ENCODE measurements at regions of chr6 and their contacts with region 1.

Region 1: DNA sequence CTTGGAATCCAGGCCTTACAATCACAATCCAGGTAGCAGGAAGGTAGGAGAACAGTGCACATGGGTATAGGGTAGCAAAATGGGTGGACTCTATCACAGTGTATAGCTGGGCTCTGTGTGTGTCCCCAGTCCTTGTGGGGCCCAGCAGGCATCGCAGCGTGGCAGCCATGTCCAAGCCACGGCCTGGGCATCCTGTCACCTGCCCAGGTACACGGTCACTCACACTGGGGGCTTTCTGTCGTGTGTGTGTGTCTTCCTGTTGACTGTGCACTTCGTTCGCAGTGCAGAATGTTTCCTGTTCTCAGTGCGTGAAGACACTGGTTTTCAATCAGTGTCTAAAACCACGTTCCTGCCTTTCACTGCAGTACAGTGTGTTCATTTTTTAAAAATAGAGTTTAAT is 523.2 kb upstream of the JARID2 start:
- DNase-seq: no peak
- H3K4me3 ChIP-seq: no peak overlapping the region
- CTCF ChIP-seq: no peak

Region 2: DNA sequence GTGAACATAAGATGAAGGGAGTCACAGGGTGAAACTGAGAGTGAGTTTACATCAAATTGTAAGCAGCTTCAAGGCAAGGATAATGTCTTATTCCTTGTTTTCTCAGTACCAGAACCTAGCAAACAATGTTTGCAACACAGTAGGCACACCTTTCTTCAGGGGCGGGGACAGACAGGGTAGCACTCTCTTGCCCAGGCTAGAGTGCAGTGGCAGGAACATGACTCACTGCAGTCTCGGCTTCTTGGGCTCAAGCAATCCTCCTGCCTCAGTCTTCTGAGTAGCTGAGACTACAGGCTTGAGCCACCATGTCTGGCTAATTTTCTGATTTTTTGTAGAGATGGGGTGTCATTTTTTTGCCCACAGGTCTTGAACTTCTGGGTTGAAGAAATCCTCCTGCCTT is 305.3 kb before region 1 on chr6:
- CTCF ChIA-PET with region 1: no interaction called
- POLR2A ChIA-PET with region 1: no interaction called
- DNase-seq: no peak
- H3K4me3 ChIP-seq: no peak overlapping the region
- CTCF ChIP-seq: no peak

Region 3: GRCh38 chr6:14711056-14711703 is 11.5 kb before region 1 on chr6:
- CTCF ChIA-PET with region 1: interaction called, 10 read pairs
- POLR2A ChIA-PET with region 1: no interaction called
- DNase-seq: no peak
- H3K4me3 ChIP-seq: no peak overlapping the region
- CTCF ChIP-seq: peak; percentile 53

Region 4: DNA sequence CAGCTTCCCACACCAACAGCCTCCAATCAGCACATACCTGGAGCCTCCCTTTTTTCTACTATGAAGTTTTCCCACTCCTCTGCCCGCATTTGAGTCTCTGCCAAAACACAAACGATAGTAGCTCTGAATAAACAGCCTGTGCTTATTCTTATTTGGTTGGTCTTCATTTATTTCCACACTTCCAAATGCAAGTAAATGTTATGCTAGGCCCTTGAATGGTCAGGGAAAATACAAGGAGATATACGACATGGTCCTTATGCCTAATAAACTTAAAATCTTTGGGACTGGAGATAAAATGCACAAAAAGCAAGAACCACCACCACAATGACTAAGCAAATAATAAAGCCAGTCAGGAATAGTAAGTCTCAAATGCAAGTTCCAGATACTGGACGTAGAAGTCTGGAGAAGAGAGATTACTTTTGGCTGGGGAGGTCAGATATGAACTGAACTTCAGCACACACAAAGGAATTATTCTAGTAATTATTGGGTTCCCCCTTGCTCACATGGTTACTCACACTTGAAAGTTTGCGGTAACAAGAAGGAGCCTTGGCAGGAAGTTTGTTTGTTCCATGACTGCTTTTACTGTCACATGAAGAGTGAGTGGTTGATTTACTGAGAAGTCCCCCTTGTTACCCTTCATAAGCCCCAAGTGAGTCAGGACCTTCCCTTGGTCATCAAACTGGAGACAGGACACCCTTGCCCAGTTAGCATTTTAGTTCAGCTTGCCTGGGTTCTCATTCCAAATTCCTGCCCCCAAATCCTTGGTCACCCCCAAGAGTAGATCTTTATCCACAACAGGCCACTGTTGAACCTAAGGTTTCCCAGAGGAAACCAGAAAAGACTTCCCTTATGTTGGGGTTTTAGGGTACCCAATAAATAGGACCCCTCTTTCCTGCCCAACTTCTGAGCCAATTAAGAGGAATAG is 12.0 kb after region 1 on chr6:
- CTCF ChIA-PET with region 1: no interaction called
- POLR2A ChIA-PET with region 1: no interaction called
- DNase-seq: peak; percentile 58
- H3K4me3 ChIP-seq: no peak overlapping the region
- CTCF ChIP-seq: no peak

Region 5: GRCh38 chr6:14758421-14759081 is 35.8 kb after region 1 on chr6:
- CTCF ChIA-PET with region 1: no interaction called
- POLR2A ChIA-PET with region 1: no interaction called
- DNase-seq: no peak
- H3K4me3 ChIP-seq: no peak overlapping the region
- CTCF ChIP-seq: no peak

Measured in AG04449 (cell line).